Activated CD8-positive, alpha-beta T cell treated with anti-CD3 and anti-CD28 coated beads for 36 hours (primary cell): ENCODE measurements at regions of chr1 and their contacts with region 1.

Region 1: GRCh38 chr1:96966536-96967138 is 245.1 kb downstream of the PTBP2 start:
- DNase-seq: peak; percentile 82
- ATAC-seq: peak; percentile 82
- H3K4me3 Mint-ChIP-seq: no peak overlapping the region
- H3K27ac Mint-ChIP-seq: no peak overlapping the region
- H3K4me1 Mint-ChIP-seq: no peaks in the 10 kb centered on the region
- H3K27me3 Mint-ChIP-seq: peaks cover 12% of the 10 kb centered on the region
- CTCF ChIP-seq: peak; percentile 92

Region 2: DNA sequence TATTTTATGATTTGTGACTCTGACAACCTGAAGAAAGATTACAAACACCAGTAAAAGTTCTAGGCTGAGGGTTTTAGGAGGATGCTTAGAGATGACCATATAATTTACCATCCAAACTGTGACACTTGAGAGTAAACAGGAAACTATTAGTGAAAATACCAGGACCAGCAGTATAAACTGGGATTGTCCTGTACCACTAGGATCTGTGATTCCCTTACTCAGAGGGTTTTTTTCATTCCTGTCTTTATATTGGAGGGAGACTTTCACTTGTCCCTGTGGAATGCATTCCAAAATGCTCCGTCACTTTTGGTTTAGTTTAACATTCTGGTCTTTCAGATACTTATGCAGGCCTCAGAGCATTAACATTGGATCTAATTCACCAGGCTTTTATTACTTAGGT is 237.8 kb after region 1 on chr1:
- CTCF ChIA-PET with region 1: no interaction called
- POLR2A ChIA-PET with region 1: no interaction called
- intact Hi-C with region 1: no loop called
- DNase-seq: no peak
- ATAC-seq: no peak
- H3K4me3 Mint-ChIP-seq: no peak overlapping the region
- H3K27ac Mint-ChIP-seq: no peak overlapping the region
- H3K4me1 Mint-ChIP-seq: no peaks in the 10 kb centered on the region
- H3K27me3 Mint-ChIP-seq: no peaks in the 10 kb centered on the region
- CTCF ChIP-seq: no peak

Region 3: DNA sequence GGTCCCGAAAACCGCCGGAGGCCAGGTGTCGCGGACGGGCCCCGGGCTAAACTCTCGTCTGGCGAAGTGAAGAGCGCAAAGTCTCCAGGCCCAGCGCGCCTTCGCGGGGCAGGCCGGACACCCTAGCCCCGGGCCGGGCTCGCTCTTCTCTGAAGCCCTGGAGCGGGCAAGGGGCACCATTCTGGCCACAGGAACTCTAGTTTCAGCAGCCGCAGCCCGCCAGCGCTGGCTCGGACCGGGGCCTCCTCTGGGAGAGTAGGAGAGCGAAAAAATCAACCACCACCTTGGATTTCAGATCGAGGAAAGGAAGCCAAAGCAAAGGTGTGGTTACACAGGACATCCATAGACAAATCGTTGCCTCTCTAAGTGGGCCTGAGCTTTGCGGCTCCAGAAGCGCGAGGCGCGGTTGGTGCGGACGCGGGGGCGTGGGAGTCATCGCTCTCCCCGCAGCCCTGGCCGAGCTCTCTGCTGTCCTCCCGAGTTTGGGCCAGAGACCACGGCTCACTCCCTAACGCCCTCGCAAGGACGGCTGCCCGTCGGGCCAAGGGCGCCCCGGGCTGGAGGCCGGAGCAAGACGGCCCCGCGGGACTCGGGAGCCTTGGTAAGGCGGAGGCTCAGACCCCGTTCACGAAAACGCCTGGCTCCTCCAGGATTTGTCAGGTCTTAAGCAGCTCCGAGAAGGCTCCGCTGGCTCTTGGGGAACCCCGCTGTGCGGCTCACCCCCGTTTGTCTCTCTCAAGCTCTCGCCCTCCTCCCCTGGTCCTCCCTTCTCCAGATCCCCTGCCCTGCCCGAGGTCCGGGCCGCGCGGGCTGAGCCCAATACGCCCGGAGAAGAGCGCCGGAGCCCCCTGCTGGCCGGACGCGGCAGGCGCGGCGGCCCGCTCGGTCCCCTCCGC is 1087.1 kb after region 1 on chr1:
- CTCF ChIA-PET with region 1: interaction called, 12 read pairs
- POLR2A ChIA-PET with region 1: no interaction called
- intact Hi-C with region 1: loop called (anchors 2 kb)
- DNase-seq: peak; percentile 58
- ATAC-seq: peak; percentile 93
- H3K4me3 Mint-ChIP-seq: peak overlapping the region; percentile 65
- H3K27ac Mint-ChIP-seq: no peak overlapping the region
- H3K4me1 Mint-ChIP-seq: peaks cover 18% of the 10 kb centered on the region
- H3K27me3 Mint-ChIP-seq: peaks cover 55% of the 10 kb centered on the region
- CTCF ChIP-seq: peak; percentile 98

Region 4: GRCh38 chr1:98468111-98468717 is 1501.6 kb after region 1 on chr1:
- CTCF ChIA-PET with region 1: no interaction called
- POLR2A ChIA-PET with region 1: no interaction called
- intact Hi-C with region 1: loop called (anchors 10 kb)
- DNase-seq: no peak
- ATAC-seq: no peak
- H3K4me3 Mint-ChIP-seq: no peak overlapping the region
- H3K27ac Mint-ChIP-seq: no peak overlapping the region
- H3K4me1 Mint-ChIP-seq: no peaks in the 10 kb centered on the region
- H3K27me3 Mint-ChIP-seq: peaks cover 1% of the 10 kb centered on the region
- CTCF ChIP-seq: peak; percentile 66